Right ventricle myocardium inferior (tissue), 1 donor: ENCODE measurements at regions of chr14 and their contacts with region 1.

Region 1: GRCh38 chr14:60164712-60165546 is at the start of gene DHRS7:
- DNase-seq: peak; percentile 96
- ATAC-seq: peak; percentile 100
- total RNA-seq, gene DHRS7: 34.6 TPM

Region 2: DNA sequence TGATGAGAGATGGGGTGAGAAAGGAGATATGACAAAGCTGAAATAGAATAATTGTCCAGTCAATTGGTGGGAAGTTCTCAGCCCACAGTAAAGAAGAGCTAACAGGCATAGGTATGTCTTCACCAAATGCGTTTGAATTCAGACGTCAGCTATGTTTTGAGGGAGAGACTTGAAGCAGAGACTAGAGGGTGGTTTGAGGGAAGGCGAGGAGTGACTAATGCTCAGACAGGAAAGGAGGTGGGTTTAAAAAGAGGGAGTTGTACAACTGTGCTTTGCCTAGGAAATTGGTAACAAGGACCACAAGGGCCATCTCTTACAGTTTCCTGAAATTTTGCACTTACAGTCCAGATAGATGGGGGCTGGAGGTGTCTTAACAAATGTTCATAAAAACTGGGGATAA is 674.2 kb before region 1 on chr14:
- intact Hi-C with region 1: loop called (anchors 5 kb)
- DNase-seq: no peak
- ATAC-seq: no peak

Region 3: GRCh38 chr14:59964251-59965007 is 200.5 kb before region 1 on chr14:
- intact Hi-C with region 1: loop called (anchors 5 kb)
- DNase-seq: no peak
- ATAC-seq: peak; percentile 20

Region 4: DNA sequence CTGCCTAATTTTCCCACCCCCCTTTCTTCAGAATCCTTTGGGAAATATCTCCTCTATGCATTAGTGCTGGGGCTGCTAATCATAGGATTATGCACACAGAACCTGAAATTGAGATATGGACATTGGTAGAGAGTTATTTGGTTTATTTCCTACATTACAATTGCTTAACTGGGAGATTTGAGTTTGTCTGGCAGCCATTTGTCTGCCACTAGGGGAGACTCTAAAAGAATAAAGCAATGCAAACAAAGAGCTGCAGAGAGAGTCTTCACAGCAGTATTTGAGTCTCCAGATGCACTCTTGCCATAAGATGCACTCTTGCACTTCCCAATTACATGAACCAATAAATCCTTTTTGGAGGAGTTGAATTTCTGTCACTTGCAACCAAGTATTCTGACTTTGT is 85.2 kb before region 1 on chr14:
- intact Hi-C with region 1: loop called (anchors 5 kb)
- DNase-seq: no peak
- ATAC-seq: no peak

Region 5: DNA sequence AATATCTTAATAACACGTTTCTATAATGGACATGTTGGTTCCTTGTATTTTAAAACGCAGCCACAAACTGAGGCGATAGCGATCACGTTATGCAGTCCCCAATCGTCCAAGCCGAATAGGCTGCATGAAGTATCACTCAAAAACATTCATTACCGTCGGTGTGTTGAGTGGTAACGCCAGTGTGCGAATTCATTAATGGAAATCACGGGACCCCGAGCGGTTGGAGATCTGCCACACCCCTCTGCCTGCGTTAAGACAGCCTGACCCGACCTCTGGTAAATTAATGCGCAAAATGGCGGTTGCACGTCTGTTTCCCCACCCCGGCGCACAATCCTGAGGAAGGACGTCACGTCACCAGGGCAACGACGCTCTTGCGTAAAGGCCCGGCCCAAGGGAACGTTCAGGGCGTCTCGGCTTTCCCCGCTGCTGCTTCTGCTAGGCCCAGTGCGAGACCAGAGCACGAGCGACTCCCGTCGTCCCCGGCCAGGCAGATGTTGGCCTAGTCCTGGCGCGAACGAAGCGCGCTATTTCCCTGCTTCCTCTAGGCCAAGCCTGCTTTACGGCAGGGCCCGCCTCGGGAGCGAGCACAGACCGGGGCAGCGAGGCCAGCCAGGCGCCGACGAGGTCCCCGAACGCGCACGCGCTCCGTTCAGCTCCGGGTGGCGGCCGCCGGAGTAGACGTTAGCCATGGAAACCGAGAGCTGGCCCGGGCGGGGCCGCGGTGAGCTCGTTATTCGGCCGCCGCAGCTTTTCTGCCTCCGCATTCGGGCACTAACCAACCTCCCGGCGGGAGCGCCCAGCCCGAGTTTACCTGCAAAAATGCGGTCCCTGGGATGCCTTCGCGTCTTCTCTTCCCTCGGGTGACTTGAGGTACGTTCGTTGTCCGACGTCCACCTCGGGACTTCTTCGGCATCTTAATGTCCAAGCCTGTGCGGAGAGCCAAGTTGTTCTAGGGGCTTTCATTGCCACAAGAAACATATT is 73.1 kb before region 1 on chr14 and contains the start of gene PCNX4:
- intact Hi-C with region 1: loop called (anchors 2 kb)
- DNase-seq: peak; percentile 97
- ATAC-seq: peak; percentile 98
- total RNA-seq, gene PCNX4: 23.5 TPM

Region 6: GRCh38 chr14:61025251-61026223 is 860.6 kb after region 1 on chr14:
- intact Hi-C with region 1: no loop called
- DNase-seq: no peak
- ATAC-seq: no peak